Activated T-helper 1 cell treated with anti-CD3 and anti-CD28 coated beads, Interleukin-12 subunit alpha, Interleukin-12 subunit beta, Interleukin-2, Interleukin-4 antibody, amounts not matched to agents 30 ng/mL and 10 ng/mL and 1 ng/mL, durations not matched to agents 14 hours and 24 hours and 36 hours (primary cell): ENCODE measurements at regions of chr1 and their contacts with region 1.

Region 1: GRCh38 chr1:198520524-198521254 is 19.8 kb downstream of the ATP6V1G3 start:
- DNase-seq: no peak
- H3K4me3 Mint-ChIP-seq: peak overlapping the region; percentile 71
- H3K27ac Mint-ChIP-seq: peak overlapping the region; percentile 84
- H3K4me1 Mint-ChIP-seq: peaks cover 62% of the 10 kb centered on the region
- H3K27me3 Mint-ChIP-seq: no peaks in the 10 kb centered on the region

Region 2: DNA sequence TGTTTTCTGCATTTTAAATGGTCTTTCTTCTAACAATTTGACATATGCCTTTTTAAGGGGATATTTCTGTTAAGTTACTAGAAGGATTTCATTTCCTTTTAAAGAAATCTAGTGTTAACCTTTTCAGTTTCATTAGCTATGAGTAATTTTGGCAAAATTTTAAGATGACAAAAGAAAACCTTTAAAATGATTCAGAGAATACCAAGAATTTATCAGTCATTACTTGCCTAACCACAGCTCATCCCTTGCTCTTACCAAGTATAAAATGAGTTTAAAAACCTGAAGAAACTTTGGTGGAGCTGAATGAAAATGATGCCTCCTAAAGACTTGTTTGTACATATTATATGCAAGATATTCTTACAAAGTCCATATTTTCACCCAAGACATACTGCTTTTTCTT is 262.2 kb before region 1 on chr1:
- intact Hi-C with region 1: loop called (anchors 1 kb)
- DNase-seq: no peak
- H3K4me3 Mint-ChIP-seq: peak overlapping the region; percentile 11
- H3K27ac Mint-ChIP-seq: peak overlapping the region; percentile 78
- H3K4me1 Mint-ChIP-seq: peaks cover 50% of the 10 kb centered on the region
- H3K27me3 Mint-ChIP-seq: no peaks in the 10 kb centered on the region

Region 3: DNA sequence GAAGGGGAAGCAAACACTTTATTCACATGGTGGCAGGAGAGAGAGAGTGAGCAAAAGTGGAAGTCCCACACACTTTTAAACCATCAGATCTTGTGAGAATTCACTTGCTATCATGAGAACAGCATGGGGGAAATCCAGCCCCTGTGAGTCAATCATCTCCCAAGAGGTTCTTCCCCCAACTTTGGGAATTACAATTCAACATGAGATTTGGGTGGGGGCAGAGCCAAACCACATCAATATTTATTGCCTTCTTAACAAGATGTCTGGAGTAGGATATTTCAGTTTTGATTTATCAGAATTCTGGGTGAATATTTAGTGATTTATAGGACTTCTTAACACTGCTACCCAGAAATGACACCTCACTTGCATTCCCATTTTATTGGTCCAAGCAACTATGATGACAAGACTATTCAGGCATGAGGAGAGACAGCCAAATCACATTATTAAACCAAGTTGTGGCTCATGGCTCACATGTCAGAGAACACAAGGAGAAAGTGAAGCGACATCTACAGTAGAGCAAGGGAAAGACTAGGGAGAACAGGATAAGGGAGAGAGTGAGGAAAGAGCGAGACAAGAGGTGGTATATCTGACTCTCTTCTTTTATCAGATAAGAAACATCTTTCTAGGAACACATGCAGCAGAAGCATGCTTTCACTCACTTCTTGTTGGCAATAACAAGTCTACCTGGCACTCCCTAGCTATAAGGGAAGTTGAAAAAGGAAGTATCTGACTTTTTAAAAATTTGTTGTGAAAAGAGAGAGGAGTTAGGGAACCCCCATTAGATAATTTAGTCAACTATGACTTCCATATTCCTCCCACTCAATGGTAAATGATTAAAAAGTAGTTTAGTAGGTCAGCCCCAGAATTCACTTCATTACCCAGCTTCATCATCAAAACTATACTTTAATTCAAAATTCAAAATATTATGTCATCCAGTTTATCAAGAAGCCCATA is 81.5 kb after region 1 on chr1:
- intact Hi-C with region 1: loop called (anchors 1 kb)
- DNase-seq: no peak
- H3K4me3 Mint-ChIP-seq: no peak overlapping the region
- H3K27ac Mint-ChIP-seq: peak overlapping the region; percentile 62
- H3K4me1 Mint-ChIP-seq: peaks cover 61% of the 10 kb centered on the region
- H3K27me3 Mint-ChIP-seq: no peaks in the 10 kb centered on the region

Region 4: DNA sequence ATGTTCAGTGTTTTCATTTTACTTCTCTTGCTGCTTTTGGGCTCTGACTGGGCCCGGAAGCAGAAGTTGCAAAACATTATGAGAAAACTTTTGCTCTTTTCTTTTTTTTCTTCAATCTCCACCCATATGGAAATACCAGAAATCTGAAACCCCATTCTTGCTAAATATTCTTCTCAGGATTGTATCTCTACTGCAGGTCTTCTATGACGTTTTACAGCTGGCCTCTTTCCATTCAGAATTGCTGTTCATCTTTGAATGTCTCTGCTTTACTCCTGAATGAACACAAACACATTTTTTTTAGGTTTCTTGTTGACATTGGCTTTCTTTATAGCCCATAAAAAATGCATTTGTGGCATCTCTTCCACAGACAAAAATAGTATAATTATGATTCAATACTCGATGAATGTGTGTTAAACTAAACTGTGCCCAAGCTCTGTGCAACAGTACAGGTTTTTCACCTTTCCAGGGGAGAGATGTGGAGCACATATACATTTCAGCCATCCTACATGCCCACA is 136.9 kb after region 1 on chr1:
- intact Hi-C with region 1: loop called (anchors 1 kb)
- DNase-seq: no peak
- H3K4me3 Mint-ChIP-seq: peak overlapping the region; percentile 63
- H3K27ac Mint-ChIP-seq: peak overlapping the region; percentile 84
- H3K4me1 Mint-ChIP-seq: peaks cover 68% of the 10 kb centered on the region
- H3K27me3 Mint-ChIP-seq: no peaks in the 10 kb centered on the region

Region 5: DNA sequence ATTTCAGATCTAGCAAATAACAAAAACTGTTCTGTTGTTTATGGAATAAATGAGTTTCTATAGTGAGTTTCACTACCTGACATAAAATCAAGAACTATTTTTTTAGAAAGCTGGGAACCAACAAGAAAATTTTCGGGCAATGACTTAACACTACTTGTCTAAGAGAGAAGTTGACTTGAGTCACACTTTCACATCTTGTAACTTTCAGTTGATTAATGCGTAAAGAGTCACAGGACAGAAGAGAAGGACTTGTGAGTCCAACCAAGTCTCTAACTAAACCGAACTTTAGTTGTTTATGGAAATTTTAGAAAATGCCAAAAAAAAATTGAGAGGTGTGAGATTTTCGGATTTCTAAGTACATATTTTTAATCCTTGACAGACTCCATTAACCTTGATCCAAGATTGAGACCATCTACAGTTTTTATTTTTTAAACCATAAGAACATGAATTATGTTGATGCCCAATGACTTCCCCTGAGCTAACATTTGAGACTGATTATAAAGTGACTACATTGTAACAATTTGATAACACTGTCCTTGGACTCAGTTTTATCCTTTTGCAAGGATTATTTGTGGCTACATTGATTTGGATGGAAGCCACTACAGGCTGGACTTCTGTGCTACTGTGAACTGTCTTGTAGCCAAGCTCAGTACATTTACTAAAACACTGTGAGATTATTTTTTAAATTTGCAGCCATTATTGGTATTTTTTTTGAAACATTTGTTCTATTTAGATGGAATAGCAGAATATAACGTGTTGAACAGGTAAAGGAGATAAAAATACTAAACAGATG is 402.1 kb after region 1 on chr1:
- intact Hi-C with region 1: loop called (anchors 5 kb)
- DNase-seq: no peak
- H3K4me3 Mint-ChIP-seq: peak overlapping the region; percentile 78
- H3K27ac Mint-ChIP-seq: peak overlapping the region; percentile 90
- H3K4me1 Mint-ChIP-seq: peaks cover 90% of the 10 kb centered on the region
- H3K27me3 Mint-ChIP-seq: no peaks in the 10 kb centered on the region

Region 6: GRCh38 chr1:199551967-199552565 is 1031.4 kb after region 1 on chr1:
- intact Hi-C with region 1: loop called (anchors 5 kb)
- DNase-seq: no peak
- H3K4me3 Mint-ChIP-seq: no peak overlapping the region
- H3K27ac Mint-ChIP-seq: no peak overlapping the region
- H3K4me1 Mint-ChIP-seq: no peaks in the 10 kb centered on the region
- H3K27me3 Mint-ChIP-seq: peaks cover 6% of the 10 kb centered on the region